ENCODE measurements at regions of chr6 and their contacts with region 1.

Region 1: GRCh38 chr6:100116411-100117194 is 122.6 kb upstream of the MCHR2 start:
- DNase-seq: peak; percentile 57
- H3K4me3 ChIP-seq: no peak overlapping the region
- H3K27me3 ChIP-seq: no peaks in the 10 kb centered on the region
- CTCF ChIP-seq: peak; percentile 75

Region 2: DNA sequence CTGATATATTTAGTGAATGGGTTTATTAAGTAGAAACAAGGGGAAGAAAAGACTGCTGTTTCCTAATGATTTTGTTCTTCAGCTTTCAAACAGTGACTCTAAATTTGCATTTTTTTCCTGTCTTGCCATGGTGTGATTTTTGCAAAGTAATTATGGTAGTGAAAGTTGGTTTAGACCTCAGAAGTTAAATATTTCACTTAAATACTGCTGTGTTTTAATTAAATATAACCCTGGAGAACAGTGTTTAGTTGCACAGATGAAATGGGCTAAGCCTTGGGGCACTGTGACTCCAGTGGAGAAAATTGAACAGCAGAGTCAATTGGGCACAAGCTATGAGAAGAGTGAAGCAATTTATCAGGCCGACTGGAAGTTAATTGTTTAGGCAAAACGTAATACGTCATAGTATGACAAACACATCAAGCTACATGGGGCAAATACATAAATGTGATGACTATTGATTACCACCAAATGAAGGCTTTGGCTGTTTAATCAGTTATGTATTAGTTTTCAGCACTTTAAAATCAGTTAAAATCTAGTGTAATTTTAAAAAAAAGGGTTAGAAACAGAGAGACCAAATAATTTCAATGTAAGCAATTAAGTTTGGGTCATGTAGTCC is 11.4 kb before region 1 on chr6:
- CTCF ChIA-PET with region 1: interaction called, 12 read pairs
- POLR2A ChIA-PET with region 1: no interaction called
- DNase-seq: no peak
- H3K4me3 ChIP-seq: no peak overlapping the region
- H3K27me3 ChIP-seq: no peaks in the 10 kb centered on the region
- CTCF ChIP-seq: no peak

Region 3: GRCh38 chr6:100176311-100176950 is 59.8 kb after region 1 on chr6:
- CTCF ChIA-PET with region 1: interaction called, 16 read pairs
- POLR2A ChIA-PET with region 1: no interaction called
- DNase-seq: peak; percentile 53
- H3K4me3 ChIP-seq: no peak overlapping the region; the same call in 1 of the 2 replicates
- H3K27me3 ChIP-seq: no peaks in the 10 kb centered on the region
- CTCF ChIP-seq: peak; percentile 59

Region 4: GRCh38 chr6:100455230-100456124 is 338.9 kb after region 1 on chr6:
- CTCF ChIA-PET with region 1: interaction called, 19 read pairs
- POLR2A ChIA-PET with region 1: no interaction called
- DNase-seq: no peak
- H3K4me3 ChIP-seq: peak overlapping the region; percentile 46
- H3K27me3 ChIP-seq: no peaks in the 10 kb centered on the region
- CTCF ChIP-seq: no peak

Region 5: DNA sequence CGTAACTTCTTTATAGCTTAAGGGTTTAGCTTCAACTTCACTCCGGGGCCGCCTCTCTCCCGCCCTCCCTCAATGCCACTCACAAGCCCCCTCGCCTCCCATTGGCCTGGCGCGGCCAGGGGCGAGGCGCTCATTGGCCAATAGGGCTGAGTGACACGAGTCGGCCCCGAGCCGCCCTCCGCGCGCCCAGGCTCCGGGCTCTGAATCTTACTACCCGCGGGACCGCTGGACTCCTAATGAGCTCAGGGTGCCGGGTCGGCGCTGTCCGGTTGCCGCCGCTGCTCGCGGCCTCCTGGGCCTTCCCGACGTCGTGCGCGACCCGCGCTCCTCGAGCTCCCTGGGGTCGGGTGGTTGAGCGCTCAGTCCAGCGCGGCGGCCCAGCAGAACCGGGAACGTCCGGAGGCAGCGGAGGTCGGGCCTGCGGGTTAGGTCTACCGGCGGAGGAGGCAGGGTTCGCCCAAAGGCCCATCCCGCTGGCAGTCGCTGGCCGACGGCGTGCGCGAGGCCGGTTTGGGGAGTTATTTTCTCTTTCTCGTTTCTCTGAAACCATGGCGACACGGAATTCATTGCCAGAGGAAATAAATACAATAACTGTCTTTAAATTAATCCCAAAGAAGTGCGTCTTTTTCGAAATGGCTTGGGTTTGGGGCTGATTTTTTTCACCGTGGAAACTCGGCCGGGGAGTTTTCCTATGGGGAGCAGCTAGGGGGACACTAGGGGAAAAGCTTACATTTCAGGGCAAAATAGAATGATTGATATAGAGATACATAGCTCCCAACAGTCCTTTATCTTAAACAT is 348.5 kb after region 1 on chr6 and contains the start of gene SIM1:
- CTCF ChIA-PET with region 1: interaction called, 30 read pairs
- POLR2A ChIA-PET with region 1: no interaction called
- DNase-seq: peak; percentile 82
- H3K4me3 ChIP-seq: peak within 1 kb of the TSS; percentile 74
- H3K27me3 ChIP-seq: no peaks in the 10 kb centered on the region
- CTCF ChIP-seq: no peak
- polyA plus RNA-seq, gene SIM1: 27.1 and 32.9 TPM in 2 replicates

Region 6: GRCh38 chr6:100479179-100480035 is 362.8 kb after region 1 on chr6:
- CTCF ChIA-PET with region 1: interaction called, 12 read pairs
- POLR2A ChIA-PET with region 1: no interaction called
- DNase-seq: no peak
- H3K4me3 ChIP-seq: no peak overlapping the region
- H3K27me3 ChIP-seq: no peaks in the 10 kb centered on the region
- CTCF ChIP-seq: peak; percentile 70

Region 7: GRCh38 chr6:100664274-100665040 is 547.9 kb after region 1 on chr6:
- CTCF ChIA-PET with region 1: interaction called, 22 read pairs
- POLR2A ChIA-PET with region 1: no interaction called
- DNase-seq: no peak
- H3K4me3 ChIP-seq: no peak overlapping the region
- H3K27me3 ChIP-seq: no peaks in the 10 kb centered on the region
- CTCF ChIP-seq: peak; percentile 59